A549 (cell line): ENCODE measurements at regions of chr12 and their contacts with region 1.

Region 1: DNA sequence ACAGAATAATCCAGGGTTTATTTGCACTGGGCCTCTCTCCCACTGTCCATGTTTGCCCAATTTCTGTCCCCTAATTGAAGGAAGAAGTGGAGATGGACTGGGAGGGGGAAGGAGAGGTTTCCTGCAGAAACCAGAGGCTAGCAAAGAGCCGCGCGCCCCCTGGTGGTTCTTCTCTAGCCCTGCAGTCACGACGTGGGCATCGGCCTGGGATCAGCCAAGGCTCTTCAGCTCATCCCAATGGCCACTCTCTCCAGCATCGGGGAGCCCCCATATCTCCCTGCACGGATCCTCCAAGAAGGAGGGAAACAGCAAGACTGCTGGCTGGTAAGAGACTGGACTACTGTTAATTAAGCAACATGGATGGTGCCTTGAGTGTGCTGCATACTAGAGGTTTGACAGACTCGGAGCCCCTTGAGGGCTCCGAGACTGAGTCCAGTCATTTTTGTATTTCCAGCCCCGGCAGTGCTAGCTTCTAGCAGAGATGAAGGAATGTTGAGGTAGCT is 18.7 kb downstream of the ZBTB39 start:
- DNase-seq: peak; percentile 80 to 82
- ATAC-seq: peak; percentile 74 to 84
- H3K4me3 ChIP-seq: no peak overlapping the region
- H3K27ac ChIP-seq: peak overlapping the region; percentile 22 to 34; a peak in 2 of 6 replicates
- H3K4me1 ChIP-seq: peaks cover 13% of the 10 kb centered on the region; the same call in 2 of the 3 replicates
- CTCF ChIP-seq: peak; percentile 91
- EP300 ChIP-seq: no peak
- POLR2A ChIP-seq: no peak
- RAD21 ChIP-seq: peak; percentile 98 to 99

Region 2: DNA sequence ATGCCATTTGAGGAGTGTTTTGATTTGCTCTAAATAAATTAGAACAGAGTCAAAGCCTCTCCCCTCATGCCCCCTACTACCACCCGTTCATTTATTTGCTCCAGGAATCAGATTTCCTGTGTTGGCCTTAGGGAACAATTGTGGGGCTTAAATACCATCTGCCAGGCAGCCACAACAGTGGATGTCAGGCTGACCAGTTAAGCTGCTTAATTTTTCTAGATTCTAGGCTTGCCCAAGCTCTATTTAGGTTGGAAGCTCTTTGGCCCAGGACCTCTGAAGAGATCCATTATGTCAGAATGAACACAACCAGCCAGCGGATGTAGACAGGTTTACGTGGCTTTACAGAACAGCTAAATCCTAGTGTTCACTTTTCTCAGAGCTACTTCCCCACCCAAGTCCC is 537.4 kb before region 1 on chr12:
- CTCF ChIA-PET with region 1: no interaction called
- POLR2A ChIA-PET with region 1: no interaction called
- DNase-seq: no peak
- ATAC-seq: no peak
- H3K4me3 ChIP-seq: no peak overlapping the region
- H3K27ac ChIP-seq: peak overlapping the region in 1 of 2 experiments; percentile 92; a peak in 1 of 6 replicates
- H3K4me1 ChIP-seq: peaks cover 9% of the 10 kb centered on the region
- CTCF ChIP-seq: no peak
- EP300 ChIP-seq: no peak
- POLR2A ChIP-seq: no peak
- RAD21 ChIP-seq: no peak

Region 3: GRCh38 chr12:56833776-56834175 is 153.8 kb before region 1 on chr12:
- CTCF ChIA-PET with region 1: interaction called, 36 read pairs
- POLR2A ChIA-PET with region 1: no interaction called
- DNase-seq: no peak
- ATAC-seq: peak in 1 of 2 experiments; percentile 36; a peak in 2 of 6 replicates
- H3K4me3 ChIP-seq: no peak overlapping the region
- H3K27ac ChIP-seq: no peak overlapping the region
- H3K4me1 ChIP-seq: peaks cover 22% of the 10 kb centered on the region; the same call in 2 of the 3 replicates
- CTCF ChIP-seq: no peak
- EP300 ChIP-seq: no peak
- POLR2A ChIP-seq: no peak
- RAD21 ChIP-seq: no peak

Region 4: DNA sequence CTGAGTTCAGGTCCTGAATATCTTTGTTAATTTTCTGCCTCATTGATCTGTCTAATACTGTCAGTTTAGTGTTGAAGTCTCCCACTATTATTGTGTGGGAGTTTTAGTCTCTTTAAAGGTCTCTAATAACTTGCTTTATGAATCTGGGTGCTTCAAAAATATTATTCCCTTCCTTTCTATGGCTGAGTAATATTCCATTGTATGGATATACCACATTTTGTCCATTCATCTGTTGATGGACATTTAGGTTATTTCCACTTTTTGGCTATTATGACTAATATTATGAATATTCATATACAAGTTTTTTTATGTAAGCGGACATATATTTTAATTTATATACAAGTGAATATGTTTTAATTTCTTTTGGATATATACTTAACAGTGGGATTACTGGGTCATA is 136.1 kb before region 1 on chr12:
- CTCF ChIA-PET with region 1: interaction called, 15 read pairs
- POLR2A ChIA-PET with region 1: no interaction called
- DNase-seq: no peak
- ATAC-seq: no peak
- H3K4me3 ChIP-seq: no peak overlapping the region
- H3K27ac ChIP-seq: no peak overlapping the region
- H3K4me1 ChIP-seq: no peaks in the 10 kb centered on the region
- CTCF ChIP-seq: no peak
- EP300 ChIP-seq: no peak
- POLR2A ChIP-seq: no peak
- RAD21 ChIP-seq: no peak

Region 5: GRCh38 chr12:56947633-56948456 is 39.8 kb before region 1 on chr12:
- CTCF ChIA-PET with region 1: interaction called, 27 read pairs
- POLR2A ChIA-PET with region 1: no interaction called
- DNase-seq: peak; percentile 34 to 54
- ATAC-seq: peak; percentile 72 to 73; a peak in 4 of 6 replicates
- H3K4me3 ChIP-seq: no peak overlapping the region
- H3K27ac ChIP-seq: no peak overlapping the region
- H3K4me1 ChIP-seq: no peaks in the 10 kb centered on the region
- CTCF ChIP-seq: peak; percentile 43; the same call in 2 of the 3 replicates
- EP300 ChIP-seq: no peak
- POLR2A ChIP-seq: no peak
- RAD21 ChIP-seq: peak; percentile 55 to 77

Region 6: DNA sequence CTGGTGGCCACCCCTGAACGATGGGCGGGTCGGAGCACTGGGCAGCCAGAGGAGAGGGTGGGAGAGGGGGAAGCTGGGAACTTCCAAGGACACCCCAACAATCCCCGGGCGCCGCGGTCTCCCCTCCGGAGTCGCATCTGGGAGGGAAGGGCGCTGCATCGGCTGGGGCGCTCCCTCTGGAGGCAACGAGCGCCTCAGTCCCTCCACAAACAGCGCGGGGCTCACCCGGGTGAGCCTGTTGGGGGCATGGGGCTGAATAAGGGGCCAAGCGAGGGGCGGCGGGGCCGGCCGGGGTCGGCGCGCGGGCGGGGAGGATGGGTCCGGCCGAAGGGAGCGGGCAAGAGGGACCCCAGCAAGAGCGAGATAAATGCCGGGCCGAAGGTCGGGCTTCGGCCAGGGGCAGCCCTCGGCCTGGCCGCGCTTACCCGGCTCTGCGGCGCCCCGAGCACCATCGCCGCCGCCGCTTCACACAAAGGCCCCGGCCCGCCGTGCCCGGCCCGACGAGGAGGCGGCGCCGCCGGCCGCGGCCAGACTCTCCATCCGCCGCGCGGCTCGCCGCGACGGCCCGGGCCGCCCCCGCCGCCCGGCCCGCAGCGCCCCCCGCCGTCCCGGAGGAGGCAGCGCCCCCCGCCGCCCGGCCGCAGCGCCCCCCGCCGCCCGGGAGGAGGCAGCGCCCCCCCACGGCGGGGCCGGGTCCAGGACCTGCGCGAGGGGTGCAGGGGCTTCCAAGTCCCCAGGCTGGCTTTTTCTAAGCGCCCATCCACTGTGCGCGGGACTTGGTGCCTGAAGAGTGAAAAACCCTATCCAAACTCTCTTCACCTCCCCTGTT is 18.6 kb after region 1 on chr12 and contains the start of gene ZBTB39:
- CTCF ChIA-PET with region 1: interaction called, 119 read pairs
- POLR2A ChIA-PET with region 1: no interaction called
- DNase-seq: peak; percentile 60 to 82
- ATAC-seq: peak; percentile 67 to 76
- H3K4me3 ChIP-seq: peak within 1 kb of the TSS; percentile 99
- H3K27ac ChIP-seq: peak within 1 kb of the TSS; percentile 98 to 99
- H3K4me1 ChIP-seq: peaks cover 39% of the 10 kb centered on the region
- CTCF ChIP-seq: peak; percentile 97
- EP300 ChIP-seq: no peak
- POLR2A ChIP-seq: peak; percentile 83
- RAD21 ChIP-seq: no peak; a peak in 1 of 5 replicates
- polyA plus RNA-seq, gene ZBTB39: 9.5 and 9.8 TPM in 2 replicates

Region 7: GRCh38 chr12:57229634-57230380 is 242.2 kb after region 1 on chr12 and contains the start of gene SHMT2:
- CTCF ChIA-PET with region 1: no interaction called
- POLR2A ChIA-PET with region 1: no interaction called
- DNase-seq: peak; percentile 97 to 99
- ATAC-seq: peak; percentile 75 to 83
- H3K4me3 ChIP-seq: peak within 1 kb of the TSS; percentile 78
- H3K27ac ChIP-seq: peak within 1 kb of the TSS; percentile 82 to 95
- H3K4me1 ChIP-seq: peaks cover 12% of the 10 kb centered on the region; the same call in 2 of the 3 replicates
- CTCF ChIP-seq: no peak
- EP300 ChIP-seq: no peak
- POLR2A ChIP-seq: peak; percentile 54
- RAD21 ChIP-seq: no peak
- polyA plus RNA-seq, gene SHMT2: 110 and 113 TPM in 2 replicates